ENCODE measurements at regions of chr12 and their contacts with region 1.

Region 1: DNA sequence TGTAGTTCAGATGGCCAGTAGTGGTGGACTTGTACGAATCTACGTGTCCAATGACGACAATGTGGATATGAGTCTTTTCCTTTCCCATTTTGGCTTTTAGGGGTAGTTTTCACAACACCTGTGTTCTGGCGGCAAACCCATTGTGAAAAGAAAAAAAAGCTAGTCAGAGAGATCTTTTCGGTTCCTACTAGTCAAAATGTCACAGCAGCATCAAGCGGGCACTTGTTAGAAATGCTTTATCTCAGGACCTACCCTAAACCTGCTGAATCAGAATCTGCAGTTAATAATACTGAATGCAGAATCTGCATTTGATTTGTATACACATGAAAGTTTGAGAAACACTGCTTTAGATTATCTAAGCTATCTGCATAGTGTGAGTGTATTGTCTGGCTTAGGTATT is 18.3 kb downstream of the AEBP2 start:
- DNase-seq: peak in 1 of 2 experiments; percentile 37
- H3K4me3 ChIP-seq: no peak overlapping the region
- H3K27ac ChIP-seq: no peak overlapping the region; the same call in 1 of the 2 replicates
- H3K4me1 ChIP-seq: peaks cover 0 to 17% (median 7%) of the 10 kb centered on the region in 4 experiments; a peak in 3 of 7 replicates
- H3K27me3 ChIP-seq: no peaks in the 10 kb centered on the region
- CTCF ChIP-seq: no peak
- EP300 ChIP-seq: no peak
- POLR2A ChIP-seq: no peak
- RAD21 ChIP-seq: no peak

Region 2: GRCh38 chr12:19421503-19422282 is 35.9 kb before region 1 on chr12:
- CTCF ChIA-PET with region 1: no interaction called
- POLR2A ChIA-PET with region 1: no interaction called
- DNase-seq: no peak
- H3K4me3 ChIP-seq: no peak overlapping the region
- H3K27ac ChIP-seq: no peak overlapping the region
- H3K4me1 ChIP-seq: no peaks in the 10 kb centered on the region
- H3K27me3 ChIP-seq: no peaks in the 10 kb centered on the region
- CTCF ChIP-seq: no peak
- EP300 ChIP-seq: no peak
- POLR2A ChIP-seq: no peak
- RAD21 ChIP-seq: no peak

Region 3: GRCh38 chr12:19447386-19447785 is 10.2 kb before region 1 on chr12:
- CTCF ChIA-PET with region 1: interaction called, 5 read pairs
- POLR2A ChIA-PET with region 1: interaction called, 15 read pairs
- DNase-seq: peak in 1 of 2 experiments; percentile 24
- H3K4me3 ChIP-seq: no peak overlapping the region
- H3K27ac ChIP-seq: no peak overlapping the region
- H3K4me1 ChIP-seq: peaks cover 1 to 7% (median 4%) of the 10 kb centered on the region in 4 experiments; a peak in 3 of 7 replicates
- H3K27me3 ChIP-seq: no peaks in the 10 kb centered on the region
- CTCF ChIP-seq: no peak
- EP300 ChIP-seq: no peak
- POLR2A ChIP-seq: no peak
- RAD21 ChIP-seq: no peak

Measured in H1 (cell line).